HepG2 (cell line): ENCODE measurements at regions of chr3 and their contacts with region 1.

Region 1: GRCh38 chr3:182713743-182714517 is 79.4 kb upstream of the ATP11B start:
- DNase-seq: peak; percentile 58
- ATAC-seq: peak; percentile 68
- H3K4me3 ChIP-seq: no peak overlapping the region
- H3K27ac ChIP-seq: no peak overlapping the region
- H3K4me1 ChIP-seq: peaks cover 35% of the 10 kb centered on the region
- H3K27me3 ChIP-seq: no peaks in the 10 kb centered on the region
- CTCF ChIP-seq: peak; percentile 75
- EP300 ChIP-seq: no peak
- POLR2A ChIP-seq: no peak
- RAD21 ChIP-seq: 0 out of 2 replicates have a peak, but pooled peaks have one; percentile 48

Region 2: DNA sequence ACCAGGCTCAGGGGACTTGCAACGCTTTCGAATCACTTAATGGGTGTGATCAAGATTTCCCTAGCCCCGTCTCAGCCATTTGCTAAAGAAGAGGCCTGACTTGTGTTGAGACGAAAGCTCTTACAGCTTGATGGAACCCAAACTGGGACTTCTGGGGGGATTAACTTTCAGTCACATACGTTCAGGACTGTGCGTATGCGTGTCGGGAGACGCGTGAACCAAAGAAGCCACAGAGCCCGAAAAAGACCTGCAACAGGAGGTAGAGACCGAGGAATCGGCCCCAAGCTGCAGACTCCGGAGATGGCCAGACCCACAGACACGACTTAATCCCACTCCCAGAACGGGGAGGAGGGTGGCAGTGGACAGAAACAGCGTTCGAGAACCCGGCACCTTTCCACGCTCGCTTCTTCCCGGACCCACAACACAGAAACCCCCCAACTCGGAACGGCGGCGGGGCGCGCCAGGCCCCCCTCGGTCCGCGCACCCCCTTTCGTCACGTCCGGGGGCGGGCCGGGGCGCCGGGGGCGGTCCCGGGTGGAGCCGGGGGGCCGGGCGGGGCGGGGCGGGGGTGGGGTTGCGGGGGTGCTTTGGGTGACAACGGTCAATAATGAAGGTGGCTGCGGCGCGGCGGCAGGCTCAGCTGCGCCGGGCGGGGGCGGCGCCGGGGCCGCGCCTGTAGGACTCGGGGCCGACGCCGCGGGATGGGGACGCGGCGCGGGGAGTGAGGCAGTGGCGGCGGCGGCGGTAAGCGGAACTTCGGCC is 79.2 kb after region 1 on chr3 and contains the start of gene ATP11B:
- CTCF ChIA-PET with region 1: no interaction called
- POLR2A ChIA-PET with region 1: interaction called, 3 read pairs
- in situ Hi-C with region 1: no loop called
- intact Hi-C with region 1: loop called (anchors 10 kb)
- DNase-seq: peak; percentile 32
- ATAC-seq: peak; percentile 91
- H3K4me3 ChIP-seq: peak within 1 kb of the TSS; percentile 79 to 97 (median 79)
- H3K27ac ChIP-seq: peak within 1 kb of the TSS; percentile 73
- H3K4me1 ChIP-seq: peaks cover 19% of the 10 kb centered on the region
- H3K27me3 ChIP-seq: peaks cover 0 to 27% of the 10 kb centered on the region in 2 experiments; a peak in 3 of 5 replicates
- CTCF ChIP-seq: no peak
- EP300 ChIP-seq: no peak
- POLR2A ChIP-seq: peak; percentile 30 to 92; a peak in 3 of 4 replicates
- RAD21 ChIP-seq: no peak
- total RNA-seq, gene ATP11B: 19.2 and 22.9 TPM in 2 replicates

Region 3: DNA sequence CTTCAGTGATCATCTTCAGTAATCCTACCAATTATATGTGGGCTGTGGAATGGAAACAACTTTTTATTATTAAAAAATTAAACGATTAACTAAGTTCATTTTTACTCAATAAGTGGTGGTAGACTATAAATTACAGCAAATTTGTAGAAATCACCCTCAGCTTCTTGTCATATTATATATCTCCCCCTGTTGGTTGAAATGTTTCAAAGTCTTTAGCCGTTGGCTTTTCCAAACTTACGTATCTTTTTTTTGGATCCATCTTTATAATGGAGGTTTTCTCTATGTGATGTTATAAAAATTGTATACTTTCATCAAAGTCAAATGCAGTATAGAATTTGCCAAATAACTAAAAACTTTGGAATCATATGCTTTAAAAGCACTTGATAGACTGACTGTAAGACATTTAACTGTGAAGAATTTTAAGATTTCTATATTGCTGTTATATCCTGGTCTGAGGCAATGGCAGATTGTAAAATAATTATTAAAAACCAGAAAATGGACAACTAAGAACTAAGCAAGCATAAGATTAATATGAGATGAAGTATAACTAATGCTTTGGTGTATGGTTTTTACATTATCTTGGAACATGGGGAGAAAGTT is 124.0 kb after region 1 on chr3:
- CTCF ChIA-PET with region 1: interaction called, 16 read pairs
- POLR2A ChIA-PET with region 1: no interaction called
- in situ Hi-C with region 1: loop called (anchors 10 kb)
- intact Hi-C with region 1: loop called (anchors 1 kb)
- DNase-seq: peak; percentile 20
- ATAC-seq: no peak
- H3K4me3 ChIP-seq: no peak overlapping the region
- H3K27ac ChIP-seq: no peak overlapping the region
- H3K4me1 ChIP-seq: no peaks in the 10 kb centered on the region
- H3K27me3 ChIP-seq: no peaks in the 10 kb centered on the region
- CTCF ChIP-seq: 0 out of 2 replicates have a peak, but pooled peaks have one; percentile 21
- EP300 ChIP-seq: no peak
- POLR2A ChIP-seq: no peak
- RAD21 ChIP-seq: no peak

Region 4: GRCh38 chr3:182909318-182910040 is 195.5 kb after region 1 on chr3:
- CTCF ChIA-PET with region 1: no interaction called
- POLR2A ChIA-PET with region 1: no interaction called
- in situ Hi-C with region 1: no loop called
- intact Hi-C with region 1: loop called (anchors 10 kb)
- DNase-seq: no peak
- ATAC-seq: peak; percentile 57; the same call in 2 of the 3 replicates
- H3K4me3 ChIP-seq: no peak overlapping the region
- H3K27ac ChIP-seq: no peak overlapping the region
- H3K4me1 ChIP-seq: no peaks in the 10 kb centered on the region
- H3K27me3 ChIP-seq: no peaks in the 10 kb centered on the region
- CTCF ChIP-seq: peak; percentile 49
- EP300 ChIP-seq: no peak
- POLR2A ChIP-seq: no peak
- RAD21 ChIP-seq: no peak

Region 5: GRCh38 chr3:182980204-182981037 is 266.5 kb after region 1 on chr3 and contains the start of gene DCUN1D1:
- CTCF ChIA-PET with region 1: no interaction called
- POLR2A ChIA-PET with region 1: no interaction called
- in situ Hi-C with region 1: no loop called
- intact Hi-C with region 1: loop called (anchors 10 kb)
- DNase-seq: peak; percentile 71
- ATAC-seq: peak; percentile 89
- H3K4me3 ChIP-seq: peak within 1 kb of the TSS; percentile 72 to 89 (median 85)
- H3K27ac ChIP-seq: peak within 1 kb of the TSS; percentile 61
- H3K4me1 ChIP-seq: peaks cover 40% of the 10 kb centered on the region
- H3K27me3 ChIP-seq: no peaks in the 10 kb centered on the region
- CTCF ChIP-seq: no peak
- EP300 ChIP-seq: no peak
- POLR2A ChIP-seq: peak; percentile 24 to 75; a peak in 3 of 4 replicates
- RAD21 ChIP-seq: peak; percentile 19
- total RNA-seq, gene DCUN1D1: 39.7 and 66.9 TPM in 2 replicates